ENCODE measurements at regions of chr19 and their contacts with region 1.

Region 1: GRCh38 chr19:47284324-47284899 is 9.7 kb downstream of the INAFM1 start:
- DNase-seq: peak; percentile 57
- CTCF ChIP-seq: peak; percentile 80

Region 2: DNA sequence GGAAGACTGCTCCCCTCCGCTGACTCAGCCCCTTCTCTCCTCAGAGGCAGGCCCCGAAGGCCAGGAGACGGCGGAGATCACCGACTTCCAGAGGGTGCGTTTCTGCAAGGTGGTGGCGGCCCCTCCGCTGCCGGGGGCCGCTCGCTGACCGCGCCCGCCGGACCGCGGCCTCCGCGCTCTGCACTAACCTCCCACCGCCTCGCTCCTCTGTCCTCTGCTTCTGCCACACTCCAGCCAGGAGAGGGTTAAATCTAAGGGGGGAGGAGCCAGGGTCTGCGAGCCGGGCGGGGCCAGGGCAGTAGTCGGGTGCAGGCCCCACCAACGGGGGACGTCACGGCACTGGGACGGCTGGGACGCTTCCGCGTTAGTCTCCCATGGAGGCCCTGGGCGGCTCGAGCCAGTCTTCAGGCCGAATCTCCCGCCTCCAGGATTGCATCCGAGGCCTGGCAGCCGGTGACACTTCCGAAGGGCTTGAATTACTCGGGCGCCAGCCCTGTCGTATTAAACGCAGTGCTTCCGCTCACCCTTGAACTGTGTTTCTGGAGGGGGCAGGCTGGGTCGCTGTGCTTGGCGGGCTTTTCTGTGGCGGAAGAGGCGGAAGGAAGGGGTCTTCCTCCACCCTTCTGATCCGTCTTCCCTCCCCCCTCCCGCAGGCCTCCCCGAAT is 11.0 kb before region 1 on chr19:
- CTCF ChIA-PET with region 1: interaction called, 20 read pairs
- POLR2A ChIA-PET with region 1: no interaction called
- DNase-seq: peak; percentile 93
- CTCF ChIP-seq: no peak

Region 3: GRCh38 chr19:47296036-47296435 is 11.6 kb after region 1 on chr19:
- CTCF ChIA-PET with region 1: interaction called, 23 read pairs
- POLR2A ChIA-PET with region 1: no interaction called
- DNase-seq: peak; percentile 83
- CTCF ChIP-seq: peak; percentile 76

Region 4: GRCh38 chr19:47305309-47305751 is 20.9 kb after region 1 on chr19:
- CTCF ChIA-PET with region 1: interaction called, 12 read pairs
- POLR2A ChIA-PET with region 1: no interaction called
- DNase-seq: peak; percentile 57
- CTCF ChIP-seq: peak; percentile 95